B cell (primary cell): ENCODE measurements at regions of chr13 and their contacts with region 1.

Region 1: GRCh38 chr13:113208424-113209335 is at the start of gene PCID2:
- DNase-seq: peak; percentile 95
- ATAC-seq: peak; percentile 69
- H3K4me3 ChIP-seq: peak within 1 kb of the TSS; percentile 68 to 88 (median 74)
- H3K4me3 Mint-ChIP-seq: peak within 1 kb of the TSS; percentile 88
- H3K27ac ChIP-seq: peak within 1 kb of the TSS; percentile 95 to 97
- H3K27ac Mint-ChIP-seq: peak within 1 kb of the TSS; percentile 91
- H3K4me1 ChIP-seq: peaks cover 15 to 24% of the 10 kb centered on the region in 2 donors
- H3K4me1 Mint-ChIP-seq: peaks cover 53% of the 10 kb centered on the region
- H3K27me3 ChIP-seq: no peaks in the 10 kb centered on the region
- H3K27me3 Mint-ChIP-seq: no peaks in the 10 kb centered on the region
- CTCF ChIP-seq: no peak
- total RNA-seq, gene PCID2: 54.1 and 61.1 TPM in 2 replicates

Region 2: GRCh38 chr13:112893570-112894422 is 314.9 kb before region 1 on chr13:
- CTCF ChIA-PET with region 1: no interaction called
- POLR2A ChIA-PET with region 1: no interaction called
- intact Hi-C with region 1: loop called (anchors 5 kb)
- DNase-seq: peak; percentile 70
- ATAC-seq: peak; percentile 79
- H3K4me3 ChIP-seq: peak overlapping the region in 4 of 5 experiments; percentile 26 to 63 (median 58)
- H3K4me3 Mint-ChIP-seq: peak overlapping the region; percentile 60
- H3K27ac ChIP-seq: peak overlapping the region; percentile 28 to 59
- H3K27ac Mint-ChIP-seq: peak overlapping the region; percentile 56
- H3K4me1 ChIP-seq: peaks cover 27 to 33% of the 10 kb centered on the region in 2 donors
- H3K4me1 Mint-ChIP-seq: peaks cover 25% of the 10 kb centered on the region
- H3K27me3 ChIP-seq: peaks cover 0 to 7% (median 0%) of the 10 kb centered on the region in 4 experiments
- H3K27me3 Mint-ChIP-seq: no peaks in the 10 kb centered on the region
- CTCF ChIP-seq: no peak

Region 3: DNA sequence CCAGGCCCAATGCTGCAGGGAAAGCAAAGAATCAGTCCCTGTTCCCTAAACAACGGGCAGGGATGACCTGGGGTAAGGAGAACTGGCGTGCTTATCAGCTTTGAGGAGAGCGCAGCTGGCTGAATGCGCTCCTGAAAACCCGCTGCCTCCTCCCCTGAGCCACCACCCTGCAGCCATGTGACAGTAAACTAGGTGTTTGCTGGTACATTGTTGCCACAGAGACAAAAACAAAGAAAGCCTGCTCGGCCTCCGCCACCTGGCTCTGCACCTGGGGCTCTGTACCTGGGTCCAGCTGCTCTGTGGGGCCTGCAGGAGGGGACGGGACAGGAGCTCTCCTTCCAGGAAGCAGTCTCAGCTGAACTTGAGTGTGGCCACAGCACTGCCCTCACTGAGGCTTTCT is 217.9 kb before region 1 on chr13:
- CTCF ChIA-PET with region 1: no interaction called
- POLR2A ChIA-PET with region 1: no interaction called
- intact Hi-C with region 1: no loop called
- DNase-seq: no peak
- ATAC-seq: no peak
- H3K4me3 ChIP-seq: no peak overlapping the region
- H3K4me3 Mint-ChIP-seq: no peak overlapping the region
- H3K27ac ChIP-seq: no peak overlapping the region
- H3K27ac Mint-ChIP-seq: no peak overlapping the region
- H3K4me1 ChIP-seq: no peaks in the 10 kb centered on the region
- H3K4me1 Mint-ChIP-seq: no peaks in the 10 kb centered on the region
- H3K27me3 ChIP-seq: no peaks in the 10 kb centered on the region
- H3K27me3 Mint-ChIP-seq: peaks cover 2% of the 10 kb centered on the region
- CTCF ChIP-seq: no peak

Region 4: GRCh38 chr13:113153810-113154748 is 54.6 kb before region 1 on chr13:
- CTCF ChIA-PET with region 1: no interaction called
- POLR2A ChIA-PET with region 1: no interaction called
- intact Hi-C with region 1: loop called (anchors 1 kb)
- DNase-seq: peak; percentile 80
- ATAC-seq: peak; percentile 88
- H3K4me3 ChIP-seq: peak overlapping the region; percentile 40 to 77 (median 52)
- H3K4me3 Mint-ChIP-seq: peak overlapping the region; percentile 81
- H3K27ac ChIP-seq: peak overlapping the region; percentile 6 to 48
- H3K27ac Mint-ChIP-seq: peak overlapping the region; percentile 71
- H3K4me1 ChIP-seq: peaks cover 22 to 25% of the 10 kb centered on the region in 2 donors
- H3K4me1 Mint-ChIP-seq: peaks cover 19% of the 10 kb centered on the region
- H3K27me3 ChIP-seq: peaks cover 0 to 46% (median 11%) of the 10 kb centered on the region in 4 experiments
- H3K27me3 Mint-ChIP-seq: peaks cover 9% of the 10 kb centered on the region
- CTCF ChIP-seq: no peak

Region 5: GRCh38 chr13:113192902-113193301 is 15.8 kb before region 1 on chr13:
- CTCF ChIA-PET with region 1: no interaction called
- POLR2A ChIA-PET with region 1: no interaction called
- intact Hi-C with region 1: no loop called
- DNase-seq: no peak
- ATAC-seq: no peak
- H3K4me3 ChIP-seq: no peak overlapping the region
- H3K4me3 Mint-ChIP-seq: no peak overlapping the region
- H3K27ac ChIP-seq: no peak overlapping the region
- H3K27ac Mint-ChIP-seq: no peak overlapping the region
- H3K4me1 ChIP-seq: no peaks in the 10 kb centered on the region
- H3K4me1 Mint-ChIP-seq: no peaks in the 10 kb centered on the region
- H3K27me3 ChIP-seq: no peaks in the 10 kb centered on the region
- H3K27me3 Mint-ChIP-seq: no peaks in the 10 kb centered on the region
- CTCF ChIP-seq: no peak

Region 6: GRCh38 chr13:113224486-113224885 is 15.8 kb after region 1 on chr13:
- CTCF ChIA-PET with region 1: no interaction called
- POLR2A ChIA-PET with region 1: no interaction called
- intact Hi-C with region 1: no loop called
- DNase-seq: no peak
- ATAC-seq: no peak
- H3K4me3 ChIP-seq: no peak overlapping the region
- H3K4me3 Mint-ChIP-seq: no peak overlapping the region
- H3K27ac ChIP-seq: no peak overlapping the region
- H3K27ac Mint-ChIP-seq: no peak overlapping the region
- H3K4me1 ChIP-seq: no peaks in the 10 kb centered on the region
- H3K4me1 Mint-ChIP-seq: peaks cover 2% of the 10 kb centered on the region
- H3K27me3 ChIP-seq: no peaks in the 10 kb centered on the region
- H3K27me3 Mint-ChIP-seq: no peaks in the 10 kb centered on the region
- CTCF ChIP-seq: no peak

Region 7: GRCh38 chr13:113245849-113246791 is 37.4 kb after region 1 on chr13:
- CTCF ChIA-PET with region 1: no interaction called
- POLR2A ChIA-PET with region 1: no interaction called
- intact Hi-C with region 1: no loop called
- DNase-seq: no peak
- ATAC-seq: no peak
- H3K4me3 ChIP-seq: no peak overlapping the region
- H3K4me3 Mint-ChIP-seq: no peak overlapping the region
- H3K27ac ChIP-seq: no peak overlapping the region
- H3K27ac Mint-ChIP-seq: no peak overlapping the region
- H3K4me1 ChIP-seq: no peaks in the 10 kb centered on the region
- H3K4me1 Mint-ChIP-seq: no peaks in the 10 kb centered on the region
- H3K27me3 ChIP-seq: no peaks in the 10 kb centered on the region
- H3K27me3 Mint-ChIP-seq: no peaks in the 10 kb centered on the region
- CTCF ChIP-seq: no peak

Region 8: DNA sequence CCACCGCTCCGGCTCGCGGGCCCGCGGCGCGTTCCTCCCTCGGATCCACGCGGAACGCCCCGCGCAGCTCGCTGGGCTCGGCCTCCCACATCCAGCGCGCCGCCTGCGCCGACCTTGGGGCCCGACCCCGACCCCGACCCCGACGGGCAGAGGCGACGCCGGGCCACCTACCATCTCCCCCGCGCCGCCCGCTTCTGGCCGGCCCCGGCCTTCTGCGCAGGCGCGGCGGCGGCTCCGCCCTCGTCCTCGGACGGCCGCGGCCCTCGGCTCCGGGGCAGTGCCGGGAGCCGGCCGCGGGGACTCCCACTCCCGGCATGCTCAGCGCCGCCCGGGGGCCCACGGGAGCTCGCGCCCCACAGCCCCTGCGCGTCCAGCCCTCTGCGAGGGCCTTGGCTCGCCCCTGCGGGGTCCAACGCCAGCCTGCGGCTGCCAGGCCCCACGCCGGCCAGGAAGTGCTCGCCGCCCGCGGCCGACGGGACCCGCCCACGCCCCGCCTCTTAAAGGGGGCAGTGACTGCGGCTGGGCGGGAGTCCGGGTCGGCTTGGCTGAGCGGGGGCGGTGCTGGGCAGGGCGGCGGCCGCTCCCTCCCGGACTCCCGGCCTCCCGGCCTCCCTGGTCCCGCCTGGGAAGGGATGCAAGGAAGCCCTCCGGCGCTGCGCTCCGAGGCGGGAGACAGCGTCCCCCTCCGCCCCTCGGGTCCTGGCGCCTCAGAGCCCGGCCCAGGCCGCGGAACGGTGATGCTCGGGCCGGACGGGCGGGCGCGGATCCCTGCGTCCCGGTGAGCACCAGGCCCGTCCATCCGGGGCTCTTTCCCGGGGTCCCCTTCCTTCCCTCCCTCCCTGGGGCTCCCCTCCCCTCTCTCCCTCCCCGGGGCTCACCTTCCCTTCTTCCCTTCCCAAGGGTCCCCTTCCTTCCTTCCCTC is 282.1 kb after region 1 on chr13 and contains the start of gene DCUN1D2:
- CTCF ChIA-PET with region 1: no interaction called
- POLR2A ChIA-PET with region 1: no interaction called
- intact Hi-C with region 1: loop called (anchors 2 kb)
- DNase-seq: peak; percentile 90
- ATAC-seq: peak; percentile 92
- H3K4me3 ChIP-seq: peak within 1 kb of the TSS; percentile 53 to 82 (median 68)
- H3K4me3 Mint-ChIP-seq: peak within 1 kb of the TSS; percentile 94
- H3K27ac ChIP-seq: peak within 1 kb of the TSS in 1 of 2 donors; percentile 73
- H3K27ac Mint-ChIP-seq: peak within 1 kb of the TSS; percentile 88
- H3K4me1 ChIP-seq: peaks cover 24 to 27% of the 10 kb centered on the region in 2 donors
- H3K4me1 Mint-ChIP-seq: peaks cover 53% of the 10 kb centered on the region
- H3K27me3 ChIP-seq: no peaks in the 10 kb centered on the region
- H3K27me3 Mint-ChIP-seq: no peaks in the 10 kb centered on the region
- CTCF ChIP-seq: no peak
- total RNA-seq, gene DCUN1D2: 38.2 and 41.3 TPM in 2 replicates